Astrocyte of the cerebellum (primary cell): ENCODE measurements at regions of chr14 and their contacts with region 1.

Region 1: GRCh38 chr14:51989293-51990234 is at the start of gene RTRAF:
- DNase-seq: peak; percentile 85
- H3K4me3 ChIP-seq: peak within 1 kb of the TSS; percentile 95
- CTCF ChIP-seq: no peak

Region 2: DNA sequence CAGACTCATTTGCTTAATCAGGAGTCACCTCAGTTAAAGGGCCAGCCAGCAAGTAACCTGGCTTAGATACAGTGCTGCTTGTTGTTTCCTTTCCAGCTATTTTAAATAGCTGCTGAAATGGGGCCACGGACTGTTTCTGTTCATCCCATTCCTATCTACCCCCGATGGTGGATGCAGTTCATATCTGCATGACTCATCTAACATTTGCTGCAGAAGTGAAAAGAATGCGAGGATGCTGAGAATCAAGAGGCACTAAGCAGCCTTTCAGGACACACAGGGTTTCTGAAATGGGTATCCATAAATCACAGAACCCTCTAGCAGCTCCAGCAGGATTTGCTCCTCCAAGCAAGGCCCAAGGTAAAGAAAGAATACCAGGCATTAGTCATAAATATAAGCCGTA is 60.4 kb before region 1 on chr14:
- in situ Hi-C with region 1: no loop called
- DNase-seq: no peak
- H3K4me3 ChIP-seq: no peak overlapping the region
- CTCF ChIP-seq: no peak

Region 3: GRCh38 chr14:52052288-52052943 is 62.9 kb after region 1 on chr14:
- in situ Hi-C with region 1: no loop called
- DNase-seq: no peak
- H3K4me3 ChIP-seq: no peak overlapping the region
- CTCF ChIP-seq: no peak

Region 4: DNA sequence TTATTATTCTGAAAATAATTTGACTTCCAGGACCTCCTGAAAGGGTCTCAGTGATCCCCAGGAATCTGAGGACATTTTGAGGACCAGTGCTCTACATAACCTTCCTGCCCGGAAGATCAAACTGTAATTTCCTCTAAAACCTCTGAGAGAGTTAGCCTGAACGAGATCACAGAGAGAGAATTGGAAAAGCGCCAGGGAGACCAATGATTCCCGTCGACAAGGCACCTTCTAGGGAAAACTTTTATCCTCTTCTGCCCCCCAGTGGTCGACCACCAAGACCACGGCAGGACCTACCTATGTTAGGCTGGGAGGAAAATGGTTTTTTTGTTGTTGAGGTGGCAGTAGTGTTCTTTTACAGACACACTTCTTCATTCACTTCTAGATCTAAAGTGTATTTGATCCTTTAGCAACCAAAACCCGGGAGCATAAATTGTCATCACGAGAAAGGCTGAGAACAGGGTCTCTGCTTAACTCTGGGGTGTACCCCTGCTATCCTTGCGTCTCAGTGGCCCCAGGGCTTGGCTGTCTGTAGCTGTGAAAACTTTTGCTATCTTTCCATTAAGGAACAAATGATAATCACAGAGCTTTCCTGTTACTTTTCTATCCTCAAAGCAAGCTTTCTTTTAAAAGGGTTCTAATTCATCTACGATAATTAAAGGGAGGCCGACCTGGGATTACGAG is 142.2 kb after region 1 on chr14:
- in situ Hi-C with region 1: loop called (anchors 5 kb)
- DNase-seq: peak; percentile 93
- H3K4me3 ChIP-seq: no peak overlapping the region
- CTCF ChIP-seq: peak; percentile 76

Region 5: GRCh38 chr14:52650774-52651173 is 661.2 kb after region 1 on chr14:
- in situ Hi-C with region 1: no loop called
- DNase-seq: no peak
- H3K4me3 ChIP-seq: no peak overlapping the region
- CTCF ChIP-seq: no peak